ENCODE measurements at regions of chr1 and their contacts with region 1.

Region 1: DNA sequence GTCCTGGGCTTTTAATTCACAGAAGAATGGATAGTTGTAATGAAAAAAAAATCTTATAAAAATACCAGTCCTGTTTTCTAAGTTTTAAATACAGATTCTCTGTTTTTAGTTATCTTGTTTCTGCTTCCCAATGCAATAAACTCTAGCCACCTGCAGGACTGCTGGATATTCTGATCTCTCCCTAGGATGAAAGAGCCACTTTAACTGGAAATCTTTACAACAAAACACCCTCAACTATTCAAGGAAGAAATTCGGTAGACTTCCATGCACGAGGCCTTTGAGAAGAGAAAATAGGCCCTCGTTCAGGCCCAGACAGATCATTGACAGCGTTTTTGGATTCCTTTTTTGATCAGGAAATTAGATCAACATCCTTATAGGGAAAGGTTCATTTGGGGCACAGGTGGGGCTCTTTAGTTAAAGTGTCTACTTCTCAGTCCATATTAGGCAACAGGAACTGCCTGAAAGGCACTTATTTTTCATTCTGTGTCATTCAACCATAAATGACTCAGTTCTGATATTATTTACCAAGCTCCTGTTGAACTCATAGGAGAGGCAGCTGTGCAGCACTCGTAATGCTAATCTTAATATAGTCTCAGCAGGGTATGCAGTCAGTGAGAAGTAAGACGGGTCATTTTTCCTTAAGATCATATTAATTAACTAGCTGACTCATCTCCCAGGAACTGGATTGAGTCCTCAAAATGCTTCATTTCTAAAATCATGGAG is 71.1 kb upstream of the ERRFI1 start:
- DNase-seq: peak; percentile 47
- ATAC-seq: peak; percentile 91
- H3K4me3 Mint-ChIP-seq: peak overlapping the region; percentile 59
- H3K27ac Mint-ChIP-seq: peak overlapping the region; percentile 96
- H3K4me1 Mint-ChIP-seq: peaks cover 40% of the 10 kb centered on the region
- H3K27me3 Mint-ChIP-seq: peaks cover 11% of the 10 kb centered on the region

Region 2: GRCh38 chr1:8047681-8048445 is 49.4 kb before region 1 on chr1:
- CTCF ChIA-PET with region 1: no interaction called
- POLR2A ChIA-PET with region 1: interaction called, 3 read pairs
- intact Hi-C with region 1: loop called (anchors 1 to 2 kb)
- DNase-seq: no peak
- ATAC-seq: no peak
- H3K4me3 Mint-ChIP-seq: no peak overlapping the region
- H3K27ac Mint-ChIP-seq: peak overlapping the region; percentile 57
- H3K4me1 Mint-ChIP-seq: peaks cover 25% of the 10 kb centered on the region
- H3K27me3 Mint-ChIP-seq: peaks cover 4% of the 10 kb centered on the region

Region 3: GRCh38 chr1:8169364-8170058 is 72.3 kb after region 1 on chr1:
- CTCF ChIA-PET with region 1: no interaction called
- POLR2A ChIA-PET with region 1: no interaction called
- intact Hi-C with region 1: loop called (anchors 5 kb)
- DNase-seq: peak; percentile 65
- ATAC-seq: peak; percentile 86
- H3K4me3 Mint-ChIP-seq: peak overlapping the region; percentile 1
- H3K27ac Mint-ChIP-seq: peak overlapping the region; percentile 93
- H3K4me1 Mint-ChIP-seq: peaks cover 39% of the 10 kb centered on the region
- H3K27me3 Mint-ChIP-seq: no peaks in the 10 kb centered on the region

Region 4: DNA sequence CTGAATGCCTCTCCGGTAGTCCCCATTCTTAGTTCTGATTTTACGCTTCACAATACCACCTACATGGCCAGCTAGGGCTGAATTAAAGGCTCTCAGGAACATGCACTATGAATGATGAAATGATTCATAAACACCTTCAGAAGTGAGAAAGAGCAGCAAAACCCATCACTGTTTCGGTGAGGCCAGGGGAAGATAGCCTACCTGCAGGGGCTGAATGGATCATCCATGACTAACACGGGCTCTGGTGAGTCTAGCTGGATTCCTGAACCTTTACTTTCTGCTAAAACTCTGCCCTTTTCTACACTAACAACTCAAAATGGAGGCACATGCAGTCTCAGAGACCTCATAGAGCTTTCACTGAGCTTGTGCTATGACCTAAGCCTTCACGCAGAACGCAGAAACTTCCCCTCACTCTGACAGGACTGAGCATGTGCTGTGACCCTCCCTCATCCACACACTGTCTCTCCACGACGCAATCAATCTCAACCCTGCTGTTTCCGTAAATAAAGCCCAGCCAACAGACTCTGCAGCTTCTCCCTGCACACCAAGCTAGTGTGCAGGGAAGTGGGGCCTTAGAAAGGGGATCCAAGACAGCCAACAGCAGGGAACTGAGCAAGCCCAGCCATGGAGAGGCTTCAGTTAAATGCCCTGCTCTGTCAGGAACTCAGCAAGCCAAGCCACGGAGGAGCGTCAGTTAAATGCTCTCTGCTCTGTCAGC is 428.5 kb after region 1 on chr1:
- CTCF ChIA-PET with region 1: no interaction called
- POLR2A ChIA-PET with region 1: no interaction called
- intact Hi-C with region 1: loop called in 1 of 2 experiments (anchors 10 kb)
- DNase-seq: peak; percentile 85
- ATAC-seq: peak; percentile 94
- H3K4me3 Mint-ChIP-seq: no peak overlapping the region
- H3K27ac Mint-ChIP-seq: no peak overlapping the region
- H3K4me1 Mint-ChIP-seq: peaks cover 24% of the 10 kb centered on the region
- H3K27me3 Mint-ChIP-seq: no peaks in the 10 kb centered on the region

Region 5: GRCh38 chr1:8649027-8649426 is 551.8 kb after region 1 on chr1:
- CTCF ChIA-PET with region 1: no interaction called
- POLR2A ChIA-PET with region 1: no interaction called
- intact Hi-C with region 1: loop called in 1 of 2 experiments (anchors 1 kb)
- DNase-seq: peak; percentile 22
- ATAC-seq: peak; percentile 85
- H3K4me3 Mint-ChIP-seq: no peak overlapping the region
- H3K27ac Mint-ChIP-seq: peak overlapping the region; percentile 37
- H3K4me1 Mint-ChIP-seq: peaks cover 50% of the 10 kb centered on the region
- H3K27me3 Mint-ChIP-seq: no peaks in the 10 kb centered on the region